Activated naive CD4-positive, alpha-beta T cell treated with anti-CD3 and anti-CD28 coated beads, Interleukin-2, amount 10 ng/mL, durations not matched to agents 7 days and 5 days (primary cell): ENCODE measurements at regions of chr2 and their contacts with region 1.

Region 1: GRCh38 chr2:225002039-225002655 is 40.1 kb downstream of the DOCK10 start:
- DNase-seq: peak; percentile 75
- H3K4me3 Mint-ChIP-seq: no peak overlapping the region
- H3K27ac Mint-ChIP-seq: peak overlapping the region; percentile 49
- H3K4me1 Mint-ChIP-seq: peaks cover 71% of the 10 kb centered on the region
- H3K27me3 Mint-ChIP-seq: no peaks in the 10 kb centered on the region

Region 2: GRCh38 chr2:224927646-224928173 is 74.4 kb before region 1 on chr2:
- CTCF ChIA-PET with region 1: interaction called, 24 read pairs
- DNase-seq: peak; percentile 81
- H3K4me3 Mint-ChIP-seq: peak overlapping the region; percentile 48
- H3K27ac Mint-ChIP-seq: peak overlapping the region; percentile 94
- H3K4me1 Mint-ChIP-seq: peaks cover 98% of the 10 kb centered on the region
- H3K27me3 Mint-ChIP-seq: no peaks in the 10 kb centered on the region

Region 3: GRCh38 chr2:224938651-224939182 is 63.4 kb before region 1 on chr2:
- CTCF ChIA-PET with region 1: interaction called, 24 read pairs
- DNase-seq: peak; percentile 39
- H3K4me3 Mint-ChIP-seq: peak overlapping the region; percentile 63
- H3K27ac Mint-ChIP-seq: peak overlapping the region; percentile 89
- H3K4me1 Mint-ChIP-seq: peaks cover 92% of the 10 kb centered on the region
- H3K27me3 Mint-ChIP-seq: no peaks in the 10 kb centered on the region

Region 4: GRCh38 chr2:224987733-224988132 is 14.4 kb before region 1 on chr2:
- CTCF ChIA-PET with region 1: interaction called, 28 read pairs
- DNase-seq: no peak
- H3K4me3 Mint-ChIP-seq: no peak overlapping the region
- H3K27ac Mint-ChIP-seq: no peak overlapping the region
- H3K4me1 Mint-ChIP-seq: peaks cover 81% of the 10 kb centered on the region
- H3K27me3 Mint-ChIP-seq: no peaks in the 10 kb centered on the region